Heart right ventricle (tissue), 16 donors: ENCODE measurements at regions of chr12 and their contacts with region 1.

Region 1: GRCh38 chr12:64419696-64420095 is 15.5 kb downstream of the XPOT start:
- DNase-seq: no peak
- ATAC-seq: no peak
- H3K4me3 ChIP-seq: peak overlapping the region in 1 of 10 donors; percentile 6
- H3K27ac ChIP-seq: peak overlapping the region in 4 of 10 donors; percentile 32 to 60 (median 49)
- H3K4me1 ChIP-seq: peaks cover 0 to 10% (median 0%) of the 10 kb centered on the region in 9 donors
- H3K27me3 ChIP-seq: no peaks in the 10 kb centered on the region
- CTCF ChIP-seq: no peak

Region 2: DNA sequence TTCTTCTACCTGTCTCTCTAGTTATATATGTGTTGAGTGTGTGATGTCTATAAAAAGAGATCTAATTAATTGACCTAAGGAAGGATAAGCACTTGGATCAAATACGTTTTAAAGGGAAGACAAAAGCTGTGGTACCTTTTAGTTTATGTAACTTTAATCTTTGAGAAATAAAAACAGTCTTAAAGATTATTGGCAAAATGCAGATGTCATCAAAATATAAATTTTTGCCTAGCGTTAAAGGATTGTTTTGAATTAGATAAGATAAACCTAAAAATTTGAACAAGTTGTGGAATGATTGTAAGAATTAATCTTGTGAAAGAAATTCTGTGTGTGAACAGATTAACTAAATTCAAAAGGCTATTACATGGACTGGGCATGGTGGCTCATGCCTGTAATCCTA is 72.1 kb before region 1 on chr12:
- intact Hi-C with region 1: no loop called
- DNase-seq: no peak
- ATAC-seq: no peak
- H3K4me3 ChIP-seq: no peak overlapping the region
- H3K27ac ChIP-seq: no peak overlapping the region
- H3K4me1 ChIP-seq: no peaks in the 10 kb centered on the region
- H3K27me3 ChIP-seq: no peaks in the 10 kb centered on the region
- CTCF ChIP-seq: no peak

Region 3: DNA sequence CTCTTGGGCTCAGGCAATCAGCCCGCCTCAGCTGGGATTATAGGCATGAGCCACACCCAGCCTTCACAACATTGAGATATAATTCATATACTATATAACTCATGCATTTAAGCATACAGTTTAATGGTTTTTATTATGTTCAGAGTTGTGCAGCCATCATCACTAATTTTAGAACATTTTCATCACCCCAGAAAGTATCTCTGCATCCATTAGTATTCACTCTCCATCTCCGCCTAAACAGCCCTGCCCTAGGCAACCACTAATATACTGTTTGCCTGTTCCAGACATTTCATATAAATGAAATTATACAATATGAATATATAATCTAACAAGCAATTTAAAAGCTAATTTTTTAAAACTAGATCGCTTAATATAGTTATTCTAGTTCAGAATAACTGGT is 67.0 kb after region 1 on chr12:
- intact Hi-C with region 1: loop called in 1 of 10 experiments (anchors 5 kb)
- DNase-seq: no peak
- ATAC-seq: no peak
- H3K4me3 ChIP-seq: no peak overlapping the region
- H3K27ac ChIP-seq: no peak overlapping the region
- H3K4me1 ChIP-seq: peaks cover 0 to 4% (median 0%) of the 10 kb centered on the region in 9 donors
- H3K27me3 ChIP-seq: no peaks in the 10 kb centered on the region
- CTCF ChIP-seq: no peak